Common myeloid progenitor, CD34-positive (primary cell): ENCODE measurements at regions of chr16 and their contacts with region 1.

Region 1: GRCh38 chr16:11356573-11357331 is 11.5 kb downstream of the RMI2 start:
- DNase-seq: peak; percentile 44 to 46 (median 45)
- H3K4me3 ChIP-seq: no peak overlapping the region
- H3K27ac ChIP-seq: no peak overlapping the region
- H3K4me1 ChIP-seq: peaks cover 14 to 40% (median 33%) of the 10 kb centered on the region in 4 experiments
- H3K27me3 ChIP-seq: peaks cover 0 to 42% (median 25%) of the 10 kb centered on the region in 5 experiments

Region 2: GRCh38 chr16:10964039-10964890 is 392.5 kb before region 1 on chr16:
- CTCF ChIA-PET with region 1: interaction called, 37 read pairs
- POLR2A ChIA-PET with region 1: no interaction called
- DNase-seq: peak; percentile 79 to 91 (median 89)
- H3K4me3 ChIP-seq: peak overlapping the region in 1 of 7 experiments; percentile 22
- H3K27ac ChIP-seq: no peak overlapping the region
- H3K4me1 ChIP-seq: peaks cover 2 to 35% (median 16%) of the 10 kb centered on the region in 4 experiments
- H3K27me3 ChIP-seq: no peaks in the 10 kb centered on the region

Region 3: GRCh38 chr16:11297492-11298142 is 59.1 kb before region 1 on chr16:
- CTCF ChIA-PET with region 1: interaction called, 15 read pairs
- POLR2A ChIA-PET with region 1: no interaction called
- DNase-seq: peak; percentile 96 to 99 (median 98)
- H3K4me3 ChIP-seq: peak overlapping the region in 4 of 7 experiments; percentile 8 to 49 (median 24)
- H3K27ac ChIP-seq: no peak overlapping the region
- H3K4me1 ChIP-seq: peaks cover 5 to 36% (median 30%) of the 10 kb centered on the region in 4 experiments
- H3K27me3 ChIP-seq: no peaks in the 10 kb centered on the region

Region 4: DNA sequence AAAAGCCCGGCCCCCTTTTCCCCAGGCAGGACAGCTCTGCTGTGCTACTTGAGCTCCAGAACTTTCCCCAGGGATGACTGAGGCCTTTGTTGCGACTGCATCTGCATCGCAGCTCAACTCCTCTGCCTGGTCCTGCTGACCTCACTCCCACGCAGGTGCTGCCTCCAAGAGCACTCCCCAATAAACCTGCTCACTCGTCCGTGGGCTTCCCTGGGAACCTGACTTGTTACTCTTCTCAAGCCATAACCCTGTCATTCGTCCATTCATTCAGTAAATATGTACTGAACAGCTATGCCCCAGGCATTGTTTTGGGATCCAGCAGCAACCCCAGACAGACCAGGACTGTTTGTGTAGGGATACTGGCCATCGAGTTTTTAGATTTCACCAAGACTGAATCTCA is 23.0 kb before region 1 on chr16:
- CTCF ChIA-PET with region 1: interaction called, 10 read pairs
- POLR2A ChIA-PET with region 1: no interaction called
- DNase-seq: no peak
- H3K4me3 ChIP-seq: no peak overlapping the region
- H3K27ac ChIP-seq: no peak overlapping the region
- H3K4me1 ChIP-seq: peaks cover 0 to 8% (median 5%) of the 10 kb centered on the region in 4 experiments
- H3K27me3 ChIP-seq: peaks cover 0 to 2% (median 0%) of the 10 kb centered on the region in 5 experiments

Region 5: GRCh38 chr16:11370084-11370931 is 13.6 kb after region 1 on chr16:
- CTCF ChIA-PET with region 1: interaction called, 15 read pairs
- POLR2A ChIA-PET with region 1: interaction called, 6 read pairs
- DNase-seq: peak; percentile 61 to 93 (median 92)
- H3K4me3 ChIP-seq: no peak overlapping the region
- H3K27ac ChIP-seq: no peak overlapping the region
- H3K4me1 ChIP-seq: peaks cover 0 to 17% (median 5%) of the 10 kb centered on the region in 4 experiments
- H3K27me3 ChIP-seq: peaks cover 0 to 7% (median 0%) of the 10 kb centered on the region in 5 experiments